IMR-90 (cell line): ENCODE measurements at regions of chr10 and their contacts with region 1.

Region 1: DNA sequence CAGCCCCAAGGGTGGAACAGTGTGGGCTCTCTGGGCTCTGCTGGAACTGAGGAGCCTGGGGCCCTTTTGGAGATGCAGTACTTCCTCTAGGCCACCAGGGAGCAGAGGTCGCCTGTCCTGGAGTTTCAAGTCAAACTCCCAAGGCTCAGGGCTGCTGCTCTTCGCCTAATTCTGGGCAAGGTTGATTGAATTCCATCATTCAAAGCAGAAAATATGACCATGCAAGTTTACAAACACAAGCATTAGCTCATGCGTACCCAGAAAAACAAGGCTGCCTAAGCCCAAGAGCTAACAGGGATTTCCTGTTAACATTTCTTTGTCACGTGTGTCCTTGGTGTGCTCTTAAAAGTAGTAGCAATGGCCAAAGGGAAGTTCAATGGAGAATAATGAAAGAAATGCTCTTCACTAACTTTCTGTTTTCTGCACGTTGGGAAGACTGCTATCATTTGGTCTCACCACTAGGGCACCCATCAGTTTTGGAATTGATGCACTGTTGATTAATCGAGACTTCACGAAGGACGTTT is 20.1 kb downstream of the LDB3 start:
- DNase-seq: peak; percentile 70
- ATAC-seq: peak; percentile 83
- H3K4me3 ChIP-seq: no peak overlapping the region
- H3K27ac ChIP-seq: peak overlapping the region; percentile 92
- H3K4me1 ChIP-seq: peaks cover 29% of the 10 kb centered on the region
- H3K27me3 ChIP-seq: no peaks in the 10 kb centered on the region
- CTCF ChIP-seq: peak; percentile 80
- POLR2A ChIP-seq: no peak
- RAD21 ChIP-seq: peak; percentile 84

Region 2: DNA sequence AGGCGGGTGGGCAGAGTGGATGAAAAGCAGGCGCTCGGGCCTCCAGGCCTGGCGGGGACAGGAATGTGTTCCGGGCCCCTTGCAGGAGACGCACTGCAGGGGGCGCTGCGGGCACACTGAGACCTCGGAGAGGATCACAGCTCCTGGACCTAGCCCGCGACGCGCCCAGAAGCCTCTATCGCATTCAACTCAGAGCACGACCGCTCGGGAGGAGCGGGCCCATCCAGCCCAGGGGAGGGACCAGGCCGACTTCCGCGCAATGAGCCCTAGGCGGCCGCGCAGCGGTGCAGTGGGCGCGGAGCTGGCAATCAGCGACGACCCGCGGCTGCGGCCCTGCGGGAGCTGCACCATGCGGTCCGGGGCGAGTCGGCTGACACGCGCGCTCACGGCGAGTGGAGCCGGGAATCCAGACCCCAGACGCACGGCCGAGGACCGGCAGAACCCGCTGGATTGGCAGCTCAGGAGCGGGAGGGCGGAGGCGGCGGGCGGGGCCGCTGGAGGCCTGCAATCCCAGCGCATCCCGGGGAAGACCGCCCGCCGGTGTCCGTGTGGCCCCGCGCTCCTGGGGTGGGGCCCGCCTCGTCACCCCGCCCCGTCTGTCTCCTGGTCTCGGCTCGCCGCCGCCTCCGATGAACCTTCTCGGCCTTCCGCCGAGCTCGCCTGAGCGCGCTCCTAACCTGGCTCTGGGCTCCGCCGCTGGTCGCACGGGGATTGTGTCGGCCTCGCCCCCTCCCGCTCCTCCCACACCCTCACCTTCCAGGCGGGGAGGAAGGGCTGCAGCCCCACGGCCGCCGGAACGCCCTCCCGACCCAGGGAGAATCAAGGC is 288.4 kb before region 1 on chr10:
- CTCF ChIA-PET with region 1: interaction called, 5 read pairs
- POLR2A ChIA-PET with region 1: interaction called, 6 read pairs
- dilution Hi-C with region 1: no loop called
- in situ Hi-C with region 1: no loop called
- intact Hi-C with region 1: loop called (anchors 1 kb)
- DNase-seq: peak; percentile 94
- ATAC-seq: peak; percentile 95
- H3K4me3 ChIP-seq: peak overlapping the region; percentile 65
- H3K27ac ChIP-seq: peak overlapping the region; percentile 65
- H3K4me1 ChIP-seq: peaks cover 10% of the 10 kb centered on the region
- H3K27me3 ChIP-seq: peaks cover 4% of the 10 kb centered on the region; the same call in 1 of the 2 replicates
- CTCF ChIP-seq: peak; percentile 95
- POLR2A ChIP-seq: peak; percentile 26; the same call in 1 of the 2 replicates
- RAD21 ChIP-seq: peak; percentile 94

Region 3: DNA sequence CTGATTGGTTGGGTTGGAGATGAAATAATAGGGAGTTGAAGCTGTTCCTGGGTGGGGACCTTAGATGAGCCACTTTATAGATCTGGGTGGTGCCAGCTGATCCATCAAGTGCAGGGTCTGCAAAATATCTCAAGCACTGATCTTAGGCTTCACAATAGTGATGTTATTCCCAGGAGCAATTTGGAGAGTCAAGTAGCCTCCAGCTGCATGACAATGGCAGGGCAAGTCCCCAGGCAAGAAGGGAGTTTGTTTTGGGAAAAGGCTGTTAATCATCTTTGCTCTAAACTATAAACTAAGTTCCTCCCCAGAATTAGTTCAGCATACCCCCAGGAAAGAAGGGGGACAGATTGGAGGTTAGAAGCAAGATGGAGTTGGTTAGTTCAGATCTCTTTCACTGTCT is 119.1 kb before region 1 on chr10:
- CTCF ChIA-PET with region 1: no interaction called
- POLR2A ChIA-PET with region 1: no interaction called
- dilution Hi-C with region 1: no loop called
- in situ Hi-C with region 1: no loop called
- intact Hi-C with region 1: no loop called
- DNase-seq: no peak
- ATAC-seq: no peak
- H3K4me3 ChIP-seq: no peak overlapping the region
- H3K27ac ChIP-seq: no peak overlapping the region
- H3K4me1 ChIP-seq: no peaks in the 10 kb centered on the region
- H3K27me3 ChIP-seq: peaks cover 8% of the 10 kb centered on the region
- CTCF ChIP-seq: no peak
- POLR2A ChIP-seq: no peak
- RAD21 ChIP-seq: no peak

Region 4: GRCh38 chr10:86585037-86585725 is 103.3 kb before region 1 on chr10:
- CTCF ChIA-PET with region 1: no interaction called
- POLR2A ChIA-PET with region 1: no interaction called
- dilution Hi-C with region 1: no loop called
- in situ Hi-C with region 1: no loop called
- intact Hi-C with region 1: loop called (anchors 5 kb)
- DNase-seq: peak; percentile 48
- ATAC-seq: peak; percentile 100
- H3K4me3 ChIP-seq: no peak overlapping the region
- H3K27ac ChIP-seq: no peak overlapping the region
- H3K4me1 ChIP-seq: no peaks in the 10 kb centered on the region
- H3K27me3 ChIP-seq: peaks cover 4% of the 10 kb centered on the region; the same call in 1 of the 2 replicates
- CTCF ChIP-seq: peak; percentile 93
- POLR2A ChIP-seq: no peak
- RAD21 ChIP-seq: peak; percentile 88

Region 5: GRCh38 chr10:86755740-86756510 is 67.5 kb after region 1 on chr10:
- CTCF ChIA-PET with region 1: no interaction called
- POLR2A ChIA-PET with region 1: interaction called, 19 read pairs
- dilution Hi-C with region 1: no loop called
- in situ Hi-C with region 1: no loop called
- intact Hi-C with region 1: loop called (anchors 2 kb)
- DNase-seq: peak; percentile 82
- ATAC-seq: peak; percentile 91
- H3K4me3 ChIP-seq: peak overlapping the region; percentile 74
- H3K27ac ChIP-seq: peak overlapping the region; percentile 98
- H3K4me1 ChIP-seq: peaks cover 2% of the 10 kb centered on the region; the same call in 1 of the 2 replicates
- H3K27me3 ChIP-seq: no peaks in the 10 kb centered on the region
- CTCF ChIP-seq: no peak
- POLR2A ChIP-seq: peak; percentile 83
- RAD21 ChIP-seq: no peak

Region 6: GRCh38 chr10:86968271-86968993 is 280.0 kb after region 1 on chr10 and contains the start of gene ADIRF:
- CTCF ChIA-PET with region 1: no interaction called
- POLR2A ChIA-PET with region 1: no interaction called
- dilution Hi-C with region 1: no loop called
- in situ Hi-C with region 1: no loop called
- intact Hi-C with region 1: loop called (anchors 1 kb)
- DNase-seq: no peak
- ATAC-seq: no peak
- H3K4me3 ChIP-seq: no peak within 1 kb of the TSS
- H3K27ac ChIP-seq: no peak within 1 kb of the TSS; the same call in 1 of the 2 replicates
- H3K4me1 ChIP-seq: peaks cover 36% of the 10 kb centered on the region
- H3K27me3 ChIP-seq: no peaks in the 10 kb centered on the region
- CTCF ChIP-seq: no peak
- POLR2A ChIP-seq: no peak
- RAD21 ChIP-seq: no peak
- total RNA-seq, gene ADIRF: 2.3 and 2.5 TPM in 2 replicates